ENCODE measurements at regions of chr9 and their contacts with region 1.

Region 1: DNA sequence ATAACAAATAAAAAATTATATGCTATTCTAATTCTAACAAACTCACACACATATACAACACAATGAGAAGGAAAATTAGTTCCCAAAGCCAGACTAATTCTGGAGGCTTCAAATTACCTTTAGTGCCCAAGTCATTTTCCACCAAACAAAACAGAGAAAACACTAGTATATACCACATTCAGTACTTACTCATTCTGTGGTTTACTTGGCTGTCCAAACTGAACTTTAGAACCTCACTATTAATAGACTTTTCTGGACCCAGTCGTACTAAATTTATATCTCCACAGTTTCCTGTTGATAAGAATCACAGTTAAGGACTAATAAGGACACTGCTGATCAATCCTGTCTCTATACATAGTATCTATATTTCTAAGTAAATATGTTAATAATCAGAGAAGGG is 66.4 kb downstream of the SETX start:
- DNase-seq: no peak
- ATAC-seq: no peak
- H3K4me3 ChIP-seq: no peak overlapping the region
- H3K27ac ChIP-seq: no peak overlapping the region
- H3K4me1 ChIP-seq: no peaks in the 10 kb centered on the region
- H3K27me3 ChIP-seq: no peaks in the 10 kb centered on the region
- CTCF ChIP-seq: no peak

Region 2: DNA sequence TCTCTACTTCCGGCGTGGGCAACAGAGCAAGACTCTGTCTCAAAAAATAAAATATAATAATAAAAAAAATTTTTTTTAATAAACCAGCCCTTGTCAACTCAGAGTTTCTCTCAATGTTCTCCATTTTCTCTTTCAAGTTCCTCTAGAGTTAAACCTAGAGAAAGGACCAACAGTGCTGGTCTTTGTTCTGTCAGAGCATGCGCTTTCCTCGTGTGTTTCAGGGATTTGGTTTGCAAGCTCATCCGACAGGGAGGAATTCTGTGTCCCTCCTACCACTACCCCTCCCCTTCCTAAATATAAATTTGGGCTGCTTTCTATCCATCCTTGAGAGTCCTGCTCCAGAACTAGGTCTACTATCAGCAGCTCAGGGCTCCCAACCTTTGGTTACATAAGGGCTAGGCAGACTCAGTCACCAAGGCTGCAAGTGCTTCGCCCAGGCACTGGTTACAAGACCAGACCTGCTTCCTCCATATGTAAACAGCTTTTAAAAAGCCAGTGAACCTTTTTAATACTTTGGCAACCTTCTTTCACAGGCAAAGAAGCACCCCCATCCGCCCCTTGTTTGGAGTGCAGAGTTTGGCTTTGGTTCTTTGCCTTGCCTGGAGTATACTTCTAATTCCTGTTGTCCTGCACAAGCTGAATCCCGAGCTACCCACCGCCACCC is 52.9 kb after region 1 on chr9:
- CTCF ChIA-PET with region 1: no interaction called
- POLR2A ChIA-PET with region 1: interaction called, 26 read pairs
- intact Hi-C with region 1: no loop called
- DNase-seq: no peak
- ATAC-seq: no peak
- H3K4me3 ChIP-seq: no peak overlapping the region
- H3K27ac ChIP-seq: no peak overlapping the region
- H3K4me1 ChIP-seq: no peaks in the 10 kb centered on the region
- H3K27me3 ChIP-seq: no peaks in the 10 kb centered on the region
- CTCF ChIP-seq: no peak

Measured in PC-3 (cell line).